Breast epithelium (tissue), 4 donors: ENCODE measurements at regions of chr2 and their contacts with region 1.

Region 1: GRCh38 chr2:173427887-173428600 is 73.4 kb downstream of the CDCA7 start:
- DNase-seq: peak in 1 of 2 donors; percentile 90
- H3K4me3 ChIP-seq: no peak overlapping the region
- H3K27ac ChIP-seq: peak overlapping the region; percentile 69 to 77
- H3K4me1 ChIP-seq: peaks cover 0 to 6% of the 10 kb centered on the region in 2 donors
- H3K27me3 ChIP-seq: no peaks in the 10 kb centered on the region
- CTCF ChIP-seq: no peak
- POLR2A ChIP-seq: no peak

Region 2: GRCh38 chr2:171430516-171431410 is 1997.3 kb before region 1 on chr2:
- intact Hi-C with region 1: no loop called
- DNase-seq: no peak
- H3K4me3 ChIP-seq: no peak overlapping the region
- H3K27ac ChIP-seq: no peak overlapping the region
- H3K4me1 ChIP-seq: peaks cover 0 to 3% of the 10 kb centered on the region in 2 donors
- H3K27me3 ChIP-seq: no peaks in the 10 kb centered on the region
- CTCF ChIP-seq: no peak
- POLR2A ChIP-seq: no peak

Region 3: GRCh38 chr2:173410579-173410978 is 17.5 kb before region 1 on chr2:
- intact Hi-C with region 1: loop called (anchors 1 kb)
- DNase-seq: no peak
- H3K4me3 ChIP-seq: no peak overlapping the region
- H3K27ac ChIP-seq: no peak overlapping the region
- H3K4me1 ChIP-seq: no peaks in the 10 kb centered on the region
- H3K27me3 ChIP-seq: no peaks in the 10 kb centered on the region
- CTCF ChIP-seq: no peak
- POLR2A ChIP-seq: no peak

Region 4: GRCh38 chr2:173441222-173441621 is 13.2 kb after region 1 on chr2:
- intact Hi-C with region 1: no loop called
- DNase-seq: no peak
- H3K4me3 ChIP-seq: no peak overlapping the region
- H3K27ac ChIP-seq: no peak overlapping the region
- H3K4me1 ChIP-seq: no peaks in the 10 kb centered on the region
- H3K27me3 ChIP-seq: no peaks in the 10 kb centered on the region
- CTCF ChIP-seq: no peak
- POLR2A ChIP-seq: no peak